ENCODE measurements at regions of chr17 and their contacts with region 1.

Region 1: GRCh38 chr17:67245073-67245755 is at the start of gene HELZ:
- DNase-seq: peak; percentile 92
- ATAC-seq: peak; percentile 43
- H3K4me3 ChIP-seq: peak within 1 kb of the TSS; percentile 87 to 93 (median 91)
- H3K27ac ChIP-seq: peak within 1 kb of the TSS; percentile 98
- H3K4me1 ChIP-seq: peaks cover 63% of the 10 kb centered on the region
- H3K27me3 ChIP-seq: no peaks in the 10 kb centered on the region; a peak in 1 of 5 replicates
- CTCF ChIP-seq: no peak
- EP300 ChIP-seq: peak in 1 of 2 experiments; percentile 63; a peak in 1 of 4 replicates
- POLR2A ChIP-seq: peak; percentile 71 to 76
- RAD21 ChIP-seq: no peak; the same call in none of the 2 replicates
- total RNA-seq, gene HELZ: 52.4 and 93.1 TPM in 2 replicates

Region 2: DNA sequence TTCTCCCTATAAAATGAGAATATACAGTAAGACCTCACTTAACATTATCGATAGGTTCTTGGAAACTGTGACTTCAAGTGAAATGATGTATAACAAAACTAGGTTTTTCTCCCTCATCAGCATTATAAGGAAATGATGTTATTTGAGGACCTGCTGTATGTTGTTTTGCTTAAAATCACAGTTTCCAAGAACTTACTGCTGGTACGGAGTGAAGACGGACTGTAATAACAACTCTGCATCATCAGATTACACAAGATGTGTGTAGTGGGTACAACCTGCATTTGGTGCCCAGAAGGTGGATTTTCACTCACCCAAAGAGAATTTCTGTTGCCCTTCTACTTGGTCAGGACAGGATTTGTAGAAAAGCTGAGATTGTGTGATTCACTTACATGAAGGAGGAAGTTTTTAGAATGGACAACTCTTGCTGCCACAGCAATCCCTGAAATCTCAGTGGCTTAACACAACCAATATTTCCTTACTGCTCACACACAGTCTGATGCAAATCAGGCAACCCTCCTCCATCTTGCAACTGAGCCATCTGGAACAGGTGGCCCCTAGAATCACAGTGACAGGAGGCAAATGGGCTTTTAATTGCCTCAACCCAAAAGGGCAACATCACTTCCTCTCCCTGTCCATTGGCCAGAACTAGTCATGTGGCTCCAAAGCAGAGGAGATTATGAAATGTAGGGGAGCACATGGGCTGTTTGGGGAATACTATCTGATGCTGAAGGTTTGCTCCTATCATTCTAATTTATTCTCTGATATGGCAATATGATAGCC is 477.9 kb before region 1 on chr17:
- CTCF ChIA-PET with region 1: no interaction called
- POLR2A ChIA-PET with region 1: no interaction called
- in situ Hi-C with region 1: no loop called
- intact Hi-C with region 1: no loop called
- DNase-seq: no peak
- ATAC-seq: no peak
- H3K4me3 ChIP-seq: no peak overlapping the region
- H3K27ac ChIP-seq: no peak overlapping the region
- H3K4me1 ChIP-seq: no peaks in the 10 kb centered on the region
- H3K27me3 ChIP-seq: no peaks in the 10 kb centered on the region
- CTCF ChIP-seq: no peak
- EP300 ChIP-seq: no peak
- POLR2A ChIP-seq: no peak
- RAD21 ChIP-seq: no peak

Region 3: GRCh38 chr17:67260170-67261011 is 15.2 kb after region 1 on chr17:
- CTCF ChIA-PET with region 1: no interaction called
- POLR2A ChIA-PET with region 1: interaction called, 5 read pairs
- in situ Hi-C with region 1: no loop called
- intact Hi-C with region 1: loop called (anchors 1 kb)
- DNase-seq: peak; percentile 77
- ATAC-seq: peak; percentile 57
- H3K4me3 ChIP-seq: no peak overlapping the region
- H3K27ac ChIP-seq: peak overlapping the region; percentile 46
- H3K4me1 ChIP-seq: peaks cover 56% of the 10 kb centered on the region
- H3K27me3 ChIP-seq: no peaks in the 10 kb centered on the region
- CTCF ChIP-seq: no peak
- EP300 ChIP-seq: no peak
- POLR2A ChIP-seq: no peak
- RAD21 ChIP-seq: no peak

Region 4: GRCh38 chr17:67366193-67367157 is 121.3 kb after region 1 on chr17 and contains the start of gene PSMD12:
- CTCF ChIA-PET with region 1: no interaction called
- POLR2A ChIA-PET with region 1: no interaction called
- in situ Hi-C with region 1: no loop called
- intact Hi-C with region 1: loop called (anchors 10 kb)
- DNase-seq: peak; percentile 90
- ATAC-seq: peak; percentile 97
- H3K4me3 ChIP-seq: peak within 1 kb of the TSS; percentile 86 to 99 (median 90)
- H3K27ac ChIP-seq: peak within 1 kb of the TSS; percentile 82
- H3K4me1 ChIP-seq: peaks cover 50% of the 10 kb centered on the region
- H3K27me3 ChIP-seq: no peaks in the 10 kb centered on the region; a peak in 1 of 5 replicates
- CTCF ChIP-seq: peak; percentile 33; the same call in 1 of the 2 replicates
- EP300 ChIP-seq: peak; percentile 24 to 32; a peak in 1 of 4 replicates
- POLR2A ChIP-seq: peak; percentile 95 to 99
- RAD21 ChIP-seq: peak; percentile 36
- total RNA-seq, gene PSMD12: 71.7 and 115 TPM in 2 replicates

Measured in HepG2 (cell line).